ENCODE measurements at regions of chr1 and their contacts with region 1.

Region 1: GRCh38 chr1:173429471-173430402 is 47.4 kb upstream of the PRDX6 start:
- DNase-seq: peak; percentile 92
- ATAC-seq: peak; percentile 98

Region 2: DNA sequence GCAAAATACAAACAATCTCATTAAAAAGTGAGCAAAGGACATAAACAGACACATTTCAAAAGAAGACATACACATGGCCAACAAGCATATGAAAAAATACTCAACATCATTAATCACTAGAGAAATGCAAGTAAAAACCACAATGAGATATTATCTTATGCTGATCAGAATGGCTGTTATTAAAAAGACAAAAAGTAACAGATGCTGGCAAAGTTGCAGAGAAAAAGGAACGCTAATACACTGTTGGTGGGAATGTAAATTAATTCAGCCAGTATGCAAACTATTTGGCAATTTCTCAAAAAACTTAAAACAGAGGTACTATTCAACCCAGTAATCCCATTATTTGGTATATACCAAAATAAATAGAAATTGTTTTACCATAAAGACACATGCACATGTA is 346.8 kb before region 1 on chr1:
- intact Hi-C with region 1: no loop called
- DNase-seq: no peak
- ATAC-seq: no peak

Region 3: GRCh38 chr1:173476664-173477285 is 47.0 kb after region 1 on chr1:
- intact Hi-C with region 1: loop called (anchors 2 kb)
- DNase-seq: peak; percentile 97
- ATAC-seq: peak; percentile 93

Region 4: GRCh38 chr1:173603056-173603620 is 173.4 kb after region 1 on chr1 and contains the start of gene SLC9C2:
- intact Hi-C with region 1: loop called (anchors 2 kb)
- DNase-seq: no peak
- ATAC-seq: peak; percentile 60
- total RNA-seq, gene SLC9C2: 0.16 TPM

Region 5: GRCh38 chr1:173714759-173715537 is 285.2 kb after region 1 on chr1 and contains the start of gene KLHL20:
- intact Hi-C with region 1: loop called (anchors 2 kb)
- DNase-seq: peak; percentile 82
- ATAC-seq: peak; percentile 98
- total RNA-seq, gene KLHL20: 16.5 TPM

Region 6: DNA sequence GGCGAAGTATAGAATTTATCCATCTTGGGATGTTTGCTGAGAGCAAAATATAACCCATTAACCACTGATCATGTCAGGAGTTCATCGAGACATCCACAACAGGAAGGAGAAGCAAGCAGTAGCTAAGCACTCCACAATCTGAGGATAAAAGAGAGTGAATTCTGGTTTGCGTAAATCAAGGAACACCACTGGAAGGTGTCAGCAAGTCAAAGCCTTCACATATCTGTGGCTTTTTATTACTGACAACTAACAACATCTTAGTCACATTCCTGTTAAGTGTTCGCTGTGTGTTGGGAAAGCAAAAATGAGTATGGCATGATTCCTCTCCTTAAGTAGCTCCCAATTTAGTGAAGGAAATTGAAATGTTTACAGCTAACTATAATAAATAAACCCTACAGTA is 350.2 kb after region 1 on chr1:
- intact Hi-C with region 1: loop called (anchors 5 kb)
- DNase-seq: no peak
- ATAC-seq: no peak

Region 7: DNA sequence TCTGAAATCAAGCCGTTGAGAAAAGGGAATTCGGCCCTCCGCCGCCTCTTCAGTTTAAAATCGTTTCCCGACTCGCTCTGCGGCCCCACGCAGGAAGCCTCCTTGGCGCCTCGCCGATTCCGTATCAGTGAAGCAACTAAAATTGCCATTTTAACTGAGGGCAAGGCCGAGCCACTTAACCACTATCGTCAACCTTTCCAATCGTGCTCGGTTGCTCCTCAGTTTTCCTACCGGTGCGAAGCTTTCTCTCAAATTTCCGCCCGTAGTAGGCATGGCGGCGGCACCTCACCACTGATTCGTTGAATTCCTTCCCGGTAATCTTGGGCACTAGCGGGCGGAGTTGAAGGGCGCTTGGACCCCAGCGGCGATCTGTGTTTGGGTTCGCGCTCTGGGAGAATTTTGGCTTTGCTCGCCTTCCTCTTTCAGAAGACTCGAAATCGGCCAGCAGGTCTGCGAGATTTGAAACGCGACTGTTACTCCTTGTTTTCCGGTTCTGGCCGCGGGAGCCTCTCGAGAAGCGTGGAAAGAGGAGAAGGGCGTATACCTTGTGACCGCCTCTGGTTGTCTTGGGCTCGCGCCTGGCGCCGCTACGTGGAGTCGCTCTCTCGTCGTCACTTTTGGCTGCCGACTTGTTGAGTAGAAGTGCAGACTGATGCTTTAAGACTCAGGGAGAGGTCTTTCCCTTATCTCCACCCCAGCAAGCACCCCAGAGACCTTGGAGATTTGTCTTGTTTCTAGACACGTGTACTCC is 394.8 kb after region 1 on chr1 and contains the starts of genes CENPL and DARS2:
- intact Hi-C with region 1: loop called (anchors 1 kb)
- DNase-seq: peak; percentile 98
- ATAC-seq: peak; percentile 99
- total RNA-seq, gene CENPL: 3.3 TPM
- total RNA-seq, gene DARS2: 13.5 TPM